ENCODE measurements at regions of chr16 and their contacts with region 1.

Region 1: GRCh38 chr16:69057400-69058378 is 47.8 kb upstream of the HAS3 start:
- DNase-seq: no peak

Region 2: DNA sequence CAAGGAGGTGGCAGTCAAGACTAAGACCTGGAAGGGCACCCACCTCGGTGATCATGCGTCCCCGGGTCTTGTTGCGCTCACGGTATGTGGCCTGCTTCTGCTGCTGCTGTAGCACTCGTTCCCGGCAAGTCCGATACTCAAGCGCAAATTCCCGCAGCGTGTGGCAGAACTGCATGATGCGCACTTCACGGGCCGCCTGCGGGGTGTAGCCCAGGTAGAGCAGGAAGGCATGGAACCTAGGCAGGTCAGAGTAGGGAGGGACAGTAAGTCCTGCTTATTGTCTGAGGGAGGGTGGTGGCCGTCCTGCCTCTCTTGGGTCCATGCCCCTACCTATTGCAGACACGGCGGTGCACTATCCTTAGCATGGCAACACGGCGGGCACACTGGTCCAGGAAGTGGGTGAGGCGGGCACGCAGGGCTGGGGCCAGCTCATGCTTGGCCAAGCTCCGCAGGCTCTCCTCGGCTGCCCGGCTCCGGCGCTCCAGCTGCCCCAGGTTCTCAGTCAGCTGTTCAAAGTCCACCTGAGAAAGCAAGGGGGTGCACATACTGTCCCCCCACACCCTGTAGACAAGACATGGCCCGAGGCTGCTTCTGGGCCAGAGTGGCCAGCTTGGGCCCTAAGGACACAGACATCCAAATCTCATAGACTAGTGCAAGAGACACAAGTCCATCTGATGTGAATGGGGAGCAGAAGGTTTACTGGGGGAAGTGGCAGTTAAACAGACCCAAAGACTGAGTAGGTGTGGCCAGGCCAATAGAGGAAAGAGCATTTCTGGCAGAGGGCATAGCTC is 1827.2 kb before region 1 on chr16:
- intact Hi-C with region 1: loop called in 1 of 2 experiments (anchors 5 kb)
- DNase-seq: no peak